ENCODE measurements at regions of chr3 and their contacts with region 1.

Region 1: DNA sequence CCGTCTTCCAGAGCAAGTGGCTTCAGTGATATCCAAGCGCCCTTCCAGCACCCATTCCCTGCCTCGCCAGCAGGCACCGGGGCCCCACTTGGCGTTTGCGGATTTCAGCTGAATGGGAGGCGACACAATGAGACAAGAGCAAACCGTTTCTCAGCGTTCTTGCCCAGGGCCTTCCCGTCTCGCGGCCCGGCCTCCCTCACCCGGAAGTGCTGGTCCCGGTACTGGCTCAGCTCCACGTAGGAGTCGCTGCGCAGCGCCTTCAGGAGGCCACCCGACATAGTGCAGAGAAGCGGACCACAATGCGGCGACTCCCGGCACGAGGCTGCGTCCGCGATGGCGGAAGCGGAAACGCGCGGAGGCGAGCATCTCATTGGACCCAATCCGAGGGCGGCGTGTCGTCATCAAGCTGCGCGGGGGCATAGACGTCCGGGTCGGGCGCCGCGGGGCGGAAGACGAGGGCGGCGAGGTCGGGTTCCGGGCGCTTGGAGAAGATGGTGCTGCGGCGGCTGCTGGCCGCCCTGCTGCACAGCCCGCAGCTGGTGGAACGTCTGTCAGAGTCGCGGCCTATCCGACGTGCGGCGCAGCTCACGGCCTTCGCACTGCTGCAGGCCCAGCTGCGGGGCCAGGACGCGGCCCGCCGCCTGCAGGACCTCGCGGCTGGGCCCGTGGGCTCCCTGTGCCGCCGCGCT is at the start of gene NCBP2:
- DNase-seq: peak; percentile 99
- H3K4me3 ChIP-seq: peak within 1 kb of the TSS; percentile 82
- H3K4me3 Mint-ChIP-seq: peak within 1 kb of the TSS; percentile 90
- H3K27ac Mint-ChIP-seq: peak within 1 kb of the TSS; percentile 92
- H3K4me1 ChIP-seq: peaks cover 18% of the 10 kb centered on the region; the same call in 1 of the 2 replicates
- H3K4me1 Mint-ChIP-seq: no peaks in the 10 kb centered on the region
- H3K27me3 ChIP-seq: no peaks in the 10 kb centered on the region
- H3K27me3 Mint-ChIP-seq: peaks cover 3% of the 10 kb centered on the region
- CTCF ChIP-seq: peak; percentile 50 to 78
- total RNA-seq, gene NCBP2: 66.8 and 70.7 TPM in 2 replicates

Region 2: DNA sequence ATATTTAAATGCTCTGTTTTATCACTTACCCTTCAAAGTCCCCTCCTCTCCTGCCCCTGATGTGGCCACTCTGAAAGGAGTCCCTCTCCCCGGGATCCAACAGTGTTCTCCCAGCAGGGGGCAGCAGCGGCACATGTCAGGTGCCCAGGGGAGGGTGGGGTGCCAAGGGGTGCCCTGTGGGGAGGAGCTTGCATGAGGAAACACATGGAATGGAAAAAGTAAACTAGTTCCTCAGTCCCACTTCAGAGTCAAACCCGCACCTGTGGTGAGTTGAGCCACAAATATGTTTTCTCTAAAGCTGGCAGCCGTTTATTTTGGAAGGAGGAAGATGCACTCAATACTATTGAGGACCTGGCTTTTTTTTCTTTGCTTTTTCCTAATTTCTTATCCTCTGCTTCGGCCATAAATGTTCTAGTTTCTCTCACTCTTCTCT is 333.0 kb before region 1 on chr3:
- CTCF ChIA-PET with region 1: interaction called, 4 read pairs
- POLR2A ChIA-PET with region 1: no interaction called
- intact Hi-C with region 1: loop called (anchors 1 kb)
- DNase-seq: peak; percentile 89 to 91
- H3K4me3 ChIP-seq: no peak overlapping the region
- H3K4me3 Mint-ChIP-seq: no peak overlapping the region
- H3K27ac Mint-ChIP-seq: no peak overlapping the region
- H3K4me1 ChIP-seq: peaks cover 17% of the 10 kb centered on the region
- H3K4me1 Mint-ChIP-seq: peaks cover 6% of the 10 kb centered on the region
- H3K27me3 ChIP-seq: no peaks in the 10 kb centered on the region
- H3K27me3 Mint-ChIP-seq: no peaks in the 10 kb centered on the region
- CTCF ChIP-seq: peak; percentile 87 to 92

Region 3: GRCh38 chr3:196837819-196838420 is 104.5 kb before region 1 on chr3:
- CTCF ChIA-PET with region 1: no interaction called
- POLR2A ChIA-PET with region 1: no interaction called
- intact Hi-C with region 1: loop called (anchors 2 kb)
- DNase-seq: peak; percentile 65 to 73
- H3K4me3 ChIP-seq: no peak overlapping the region
- H3K4me3 Mint-ChIP-seq: no peak overlapping the region
- H3K27ac Mint-ChIP-seq: no peak overlapping the region
- H3K4me1 ChIP-seq: 0 out of 2 replicates have a peak, but pooled peaks cover 3% of the 10 kb centered on the region
- H3K4me1 Mint-ChIP-seq: no peaks in the 10 kb centered on the region
- H3K27me3 ChIP-seq: no peaks in the 10 kb centered on the region
- H3K27me3 Mint-ChIP-seq: no peaks in the 10 kb centered on the region
- CTCF ChIP-seq: peak; percentile 52 to 67

Region 4: GRCh38 chr3:196927571-196928453 is 14.6 kb before region 1 on chr3:
- CTCF ChIA-PET with region 1: interaction called, 3 read pairs
- POLR2A ChIA-PET with region 1: interaction called, 3 read pairs
- intact Hi-C with region 1: loop called (anchors 1 kb)
- DNase-seq: no peak
- H3K4me3 ChIP-seq: no peak overlapping the region
- H3K4me3 Mint-ChIP-seq: no peak overlapping the region
- H3K27ac Mint-ChIP-seq: no peak overlapping the region
- H3K4me1 ChIP-seq: no peaks in the 10 kb centered on the region
- H3K4me1 Mint-ChIP-seq: no peaks in the 10 kb centered on the region
- H3K27me3 ChIP-seq: no peaks in the 10 kb centered on the region
- H3K27me3 Mint-ChIP-seq: no peaks in the 10 kb centered on the region
- CTCF ChIP-seq: no peak

Region 5: DNA sequence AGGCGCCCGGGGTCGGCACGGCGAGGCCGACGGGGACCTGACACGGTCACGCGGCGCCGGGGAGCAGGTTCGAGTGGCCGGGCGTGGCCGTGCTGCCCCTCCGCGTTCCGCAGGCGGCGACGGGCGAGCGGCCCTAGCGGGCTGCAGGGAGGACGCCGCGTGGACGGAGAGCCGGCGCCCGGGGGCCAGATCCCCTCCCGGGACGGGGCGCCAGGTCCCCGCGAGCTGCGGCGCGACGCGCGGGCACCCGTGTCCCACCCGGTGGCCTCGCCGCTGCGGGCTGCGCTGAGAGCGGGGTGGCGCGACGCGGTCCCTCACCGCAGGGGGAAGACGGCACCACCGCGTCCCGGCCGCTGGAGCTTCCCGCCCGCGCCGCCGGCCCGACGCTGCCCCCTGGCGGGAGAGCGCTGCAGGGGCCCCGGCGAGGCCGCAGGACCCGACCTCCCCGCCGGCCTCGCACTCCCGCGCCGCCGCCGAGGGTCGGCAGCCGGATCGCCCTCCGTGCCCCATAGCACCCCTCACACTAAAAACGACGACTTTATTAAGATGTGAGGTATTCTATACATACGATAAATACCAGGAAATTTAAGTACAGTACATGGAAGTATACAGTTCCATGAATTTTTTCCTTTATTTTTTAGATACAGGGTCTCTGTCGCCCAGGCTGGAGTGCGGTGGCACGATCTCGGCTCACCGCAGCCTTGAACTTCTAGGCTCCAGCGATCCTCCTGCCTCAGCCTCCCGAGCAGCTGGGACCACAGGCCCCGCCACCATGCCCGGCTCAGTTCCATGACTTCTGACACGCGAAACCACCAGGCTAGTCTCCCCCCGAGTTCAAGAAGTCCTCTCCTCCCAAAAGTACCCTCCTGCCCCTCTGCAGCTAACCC is 27.5 kb after region 1 on chr3:
- CTCF ChIA-PET with region 1: interaction called, 11 read pairs
- POLR2A ChIA-PET with region 1: interaction called, 3 read pairs
- intact Hi-C with region 1: no loop called
- DNase-seq: peak in 1 of 2 experiments; percentile 88
- H3K4me3 ChIP-seq: peak overlapping the region; percentile 89
- H3K4me3 Mint-ChIP-seq: peak overlapping the region; percentile 71
- H3K27ac Mint-ChIP-seq: peak overlapping the region; percentile 70
- H3K4me1 ChIP-seq: peaks cover 10% of the 10 kb centered on the region; the same call in 1 of the 2 replicates
- H3K4me1 Mint-ChIP-seq: peaks cover 16% of the 10 kb centered on the region
- H3K27me3 ChIP-seq: no peaks in the 10 kb centered on the region
- H3K27me3 Mint-ChIP-seq: no peaks in the 10 kb centered on the region
- CTCF ChIP-seq: peak; percentile 40 to 89

Region 6: GRCh38 chr3:196988241-196989029 is 46.1 kb after region 1 on chr3:
- CTCF ChIA-PET with region 1: no interaction called
- POLR2A ChIA-PET with region 1: no interaction called
- intact Hi-C with region 1: no loop called
- DNase-seq: peak; percentile 69 to 87
- H3K4me3 ChIP-seq: no peak overlapping the region
- H3K4me3 Mint-ChIP-seq: no peak overlapping the region
- H3K27ac Mint-ChIP-seq: peak overlapping the region; percentile 68
- H3K4me1 ChIP-seq: peaks cover 38% of the 10 kb centered on the region
- H3K4me1 Mint-ChIP-seq: peaks cover 15% of the 10 kb centered on the region
- H3K27me3 ChIP-seq: no peaks in the 10 kb centered on the region
- H3K27me3 Mint-ChIP-seq: no peaks in the 10 kb centered on the region
- CTCF ChIP-seq: peak in 1 of 2 experiments; percentile 48

Measured in Caco-2 (cell line).